Activated CD8-positive, alpha-beta memory T cell treated with anti-CD3 and anti-CD28 coated beads, Interleukin-2, amount 10 ng/mL, durations not matched to agents 7 days and 5 days (primary cell): ENCODE measurements at regions of chr1 and their contacts with region 1.

Region 1: GRCh38 chr1:55277377-55278130 is 62.4 kb upstream of the USP24 start:
- DNase-seq: peak; percentile 87
- ATAC-seq: peak; percentile 91
- H3K4me3 Mint-ChIP-seq: no peak overlapping the region
- H3K27ac Mint-ChIP-seq: no peak overlapping the region
- H3K4me1 Mint-ChIP-seq: peaks cover 24% of the 10 kb centered on the region
- H3K27me3 Mint-ChIP-seq: peaks cover 12% of the 10 kb centered on the region

Region 2: GRCh38 chr1:54987919-54988705 is 289.4 kb before region 1 on chr1:
- CTCF ChIA-PET with region 1: no interaction called
- DNase-seq: no peak
- ATAC-seq: no peak
- H3K4me3 Mint-ChIP-seq: no peak overlapping the region
- H3K27ac Mint-ChIP-seq: no peak overlapping the region
- H3K4me1 Mint-ChIP-seq: peaks cover 7% of the 10 kb centered on the region
- H3K27me3 Mint-ChIP-seq: peaks cover 18% of the 10 kb centered on the region

Region 3: GRCh38 chr1:55140546-55140983 is 137.0 kb before region 1 on chr1:
- CTCF ChIA-PET with region 1: interaction called, 92 read pairs
- DNase-seq: peak; percentile 86
- ATAC-seq: peak; percentile 98
- H3K4me3 Mint-ChIP-seq: no peak overlapping the region
- H3K27ac Mint-ChIP-seq: peak overlapping the region; percentile 38
- H3K4me1 Mint-ChIP-seq: peaks cover 22% of the 10 kb centered on the region
- H3K27me3 Mint-ChIP-seq: no peaks in the 10 kb centered on the region

Region 4: GRCh38 chr1:55146781-55147180 is 130.8 kb before region 1 on chr1:
- CTCF ChIA-PET with region 1: interaction called, 92 read pairs
- DNase-seq: no peak
- ATAC-seq: no peak
- H3K4me3 Mint-ChIP-seq: no peak overlapping the region
- H3K27ac Mint-ChIP-seq: no peak overlapping the region
- H3K4me1 Mint-ChIP-seq: peaks cover 11% of the 10 kb centered on the region
- H3K27me3 Mint-ChIP-seq: no peaks in the 10 kb centered on the region

Region 5: GRCh38 chr1:55155514-55155913 is 122.0 kb before region 1 on chr1:
- CTCF ChIA-PET with region 1: interaction called, 12 read pairs
- DNase-seq: no peak
- ATAC-seq: no peak
- H3K4me3 Mint-ChIP-seq: no peak overlapping the region
- H3K27ac Mint-ChIP-seq: no peak overlapping the region
- H3K4me1 Mint-ChIP-seq: peaks cover 26% of the 10 kb centered on the region
- H3K27me3 Mint-ChIP-seq: no peaks in the 10 kb centered on the region

Region 6: GRCh38 chr1:55244476-55245099 is 33.0 kb before region 1 on chr1:
- CTCF ChIA-PET with region 1: no interaction called
- DNase-seq: no peak
- ATAC-seq: no peak
- H3K4me3 Mint-ChIP-seq: no peak overlapping the region
- H3K27ac Mint-ChIP-seq: no peak overlapping the region
- H3K4me1 Mint-ChIP-seq: peaks cover 3% of the 10 kb centered on the region
- H3K27me3 Mint-ChIP-seq: peaks cover 9% of the 10 kb centered on the region